ENCODE measurements at regions of chr20 and their contacts with region 1.

Region 1: DNA sequence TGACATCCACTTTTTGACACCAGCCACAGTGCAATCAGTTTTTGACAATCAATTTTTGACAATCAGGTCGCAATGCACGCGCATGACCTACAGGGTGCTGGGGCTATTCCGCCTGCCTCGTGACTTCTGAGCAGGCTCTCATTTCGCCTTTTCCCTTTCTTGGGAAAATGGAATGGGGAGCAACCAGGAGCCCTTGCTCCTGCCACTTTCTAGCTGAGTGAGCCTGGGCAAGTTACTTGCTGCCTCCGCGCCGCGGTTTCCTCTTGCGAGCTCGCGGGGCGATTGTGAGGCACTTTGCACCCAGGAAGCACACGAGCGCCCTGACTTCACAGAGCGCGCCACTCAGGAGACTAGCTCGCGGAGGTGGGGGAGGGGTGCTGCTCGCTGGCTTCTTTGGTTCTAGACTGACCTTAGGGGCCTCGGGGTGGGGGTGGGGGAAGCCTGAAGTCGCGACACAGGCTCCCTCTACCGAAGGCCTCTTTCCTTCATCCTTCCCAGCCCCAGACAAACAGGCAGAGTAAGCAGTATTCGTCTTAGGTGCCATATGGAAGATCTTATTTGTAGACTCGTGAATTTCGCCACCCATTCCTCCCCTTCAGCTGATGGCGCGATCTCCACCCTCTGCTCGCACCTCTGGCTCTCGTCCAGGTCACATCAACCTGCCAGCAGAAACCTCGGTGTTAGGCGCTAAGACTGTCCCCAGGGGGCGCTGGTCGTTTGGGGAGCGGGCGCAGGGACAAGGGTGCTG is 4.6 kb downstream of the TP53TG5 start:
- DNase-seq: peak; percentile 74
- H3K4me3 ChIP-seq: peak overlapping the region; percentile 27 to 33
- H3K27ac ChIP-seq: peak overlapping the region; percentile 48 to 62
- H3K4me1 ChIP-seq: no peaks in the 10 kb centered on the region
- H3K27me3 ChIP-seq: no peaks in the 10 kb centered on the region
- CTCF ChIP-seq: peak; percentile 69 to 94 (median 80)
- POLR2A ChIP-seq: no peak

Region 2: GRCh38 chr20:45318948-45319347 is 54.6 kb before region 1 on chr20:
- intact Hi-C with region 1: loop called (anchors 5 kb)
- DNase-seq: no peak
- H3K4me3 ChIP-seq: no peak overlapping the region
- H3K27ac ChIP-seq: no peak overlapping the region
- H3K4me1 ChIP-seq: no peaks in the 10 kb centered on the region
- H3K27me3 ChIP-seq: peaks cover 6% of the 10 kb centered on the region
- CTCF ChIP-seq: no peak
- POLR2A ChIP-seq: no peak

Region 3: GRCh38 chr20:45406259-45407066 is 32.9 kb after region 1 on chr20:
- intact Hi-C with region 1: loop called (anchors 5 kb)
- DNase-seq: peak; percentile 63
- H3K4me3 ChIP-seq: peak overlapping the region; percentile 72 to 87
- H3K27ac ChIP-seq: peak overlapping the region; percentile 82 to 89
- H3K4me1 ChIP-seq: peaks cover 8% of the 10 kb centered on the region
- H3K27me3 ChIP-seq: no peaks in the 10 kb centered on the region
- CTCF ChIP-seq: peak in 1 of 4 experiments; percentile 8
- POLR2A ChIP-seq: peak; percentile 54

Region 4: DNA sequence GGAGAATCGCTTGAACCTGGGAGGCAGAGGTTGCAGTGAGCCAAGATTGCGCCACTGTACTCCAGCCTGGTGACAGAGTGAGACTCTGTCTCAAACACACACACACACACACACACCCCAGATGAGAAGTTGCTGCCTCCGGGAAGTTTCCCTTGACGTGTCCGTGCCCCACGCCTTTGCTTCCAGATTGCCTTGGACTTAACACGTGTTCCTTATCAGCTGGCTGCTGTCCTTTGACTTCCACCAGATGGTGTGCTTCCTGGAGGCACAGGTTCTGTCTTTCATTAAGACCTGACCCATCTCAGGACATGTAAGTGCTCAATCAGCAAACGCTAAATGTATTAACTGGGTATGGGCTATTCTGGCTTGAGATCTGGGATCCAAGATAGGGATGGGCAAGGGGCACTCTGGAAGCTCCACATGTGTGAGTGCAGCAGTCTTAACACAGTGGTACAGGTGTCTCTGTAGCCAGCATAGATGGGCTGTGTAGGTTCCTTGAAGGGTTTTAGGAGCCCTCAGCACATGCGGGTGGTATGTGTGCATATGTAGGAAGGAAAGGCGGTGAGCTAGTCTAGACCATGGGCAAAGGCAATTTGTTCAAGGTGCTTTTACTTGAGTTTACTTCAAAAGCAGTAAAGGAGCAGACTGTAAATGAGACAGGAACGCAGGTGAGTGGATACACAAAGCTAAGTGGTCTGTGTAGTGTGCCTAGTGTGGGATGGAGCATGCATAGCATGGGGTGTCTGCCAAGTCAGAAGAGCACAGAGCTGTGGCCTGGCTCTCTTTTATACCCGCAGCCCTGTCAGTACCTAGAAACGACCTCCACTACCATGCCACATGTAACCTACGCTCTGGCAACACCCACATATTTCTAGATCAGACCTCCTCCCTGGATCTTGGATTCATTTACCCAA is 54.0 kb after region 1 on chr20:
- intact Hi-C with region 1: no loop called
- DNase-seq: no peak
- H3K4me3 ChIP-seq: no peak overlapping the region
- H3K27ac ChIP-seq: no peak overlapping the region
- H3K4me1 ChIP-seq: no peaks in the 10 kb centered on the region
- H3K27me3 ChIP-seq: no peaks in the 10 kb centered on the region
- CTCF ChIP-seq: no peak
- POLR2A ChIP-seq: no peak